Panc1 (cell line): ENCODE measurements at regions of chr9 and their contacts with region 1.

Region 1: GRCh38 chr9:107489687-107490605 is at the start of gene KLF4:
- DNase-seq: no peak
- ATAC-seq: peak; percentile 80
- H3K4me3 ChIP-seq: peak within 1 kb of the TSS; percentile 48 to 71
- H3K27ac ChIP-seq: 0 out of 2 replicates have a peak within 1 kb of the TSS, but pooled peaks have one; percentile 34
- H3K4me1 ChIP-seq: no peaks in the 10 kb centered on the region; the same call in 1 of the 2 replicates
- H3K27me3 ChIP-seq: no peaks in the 10 kb centered on the region
- CTCF ChIP-seq: no peak
- total RNA-seq, gene KLF4: 5.2 TPM

Region 2: DNA sequence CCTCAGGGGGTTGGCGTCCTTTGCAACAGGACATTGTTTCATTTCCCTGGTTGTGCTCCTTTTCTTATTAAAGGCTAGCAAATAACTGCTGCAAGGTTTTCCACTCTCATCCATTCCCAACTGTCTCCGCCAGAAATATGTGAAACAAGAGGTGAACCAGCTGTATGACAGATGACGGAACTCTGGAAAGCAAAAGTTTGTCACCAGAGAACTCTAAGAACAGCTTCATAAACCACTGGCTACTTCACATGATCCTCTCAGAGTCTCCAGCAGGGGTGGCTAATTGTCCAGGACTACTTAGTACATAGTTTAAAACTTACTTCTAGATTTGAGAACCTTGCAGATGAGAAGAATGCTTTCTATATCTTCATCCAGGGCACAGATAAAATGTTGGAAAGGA is 402.7 kb before region 1 on chr9:
- CTCF ChIA-PET with region 1: no interaction called
- POLR2A ChIA-PET with region 1: no interaction called
- in situ Hi-C with region 1: no loop called
- intact Hi-C with region 1: no loop called
- DNase-seq: no peak
- ATAC-seq: no peak
- H3K4me3 ChIP-seq: no peak overlapping the region
- H3K27ac ChIP-seq: no peak overlapping the region
- H3K4me1 ChIP-seq: no peaks in the 10 kb centered on the region
- H3K27me3 ChIP-seq: no peaks in the 10 kb centered on the region
- CTCF ChIP-seq: no peak

Region 3: GRCh38 chr9:107389617-107390071 is 100.3 kb before region 1 on chr9:
- CTCF ChIA-PET with region 1: no interaction called
- POLR2A ChIA-PET with region 1: no interaction called
- in situ Hi-C with region 1: no loop called
- intact Hi-C with region 1: no loop called
- DNase-seq: no peak
- ATAC-seq: no peak
- H3K4me3 ChIP-seq: no peak overlapping the region
- H3K27ac ChIP-seq: no peak overlapping the region
- H3K4me1 ChIP-seq: no peaks in the 10 kb centered on the region
- H3K27me3 ChIP-seq: no peaks in the 10 kb centered on the region
- CTCF ChIP-seq: no peak

Region 4: DNA sequence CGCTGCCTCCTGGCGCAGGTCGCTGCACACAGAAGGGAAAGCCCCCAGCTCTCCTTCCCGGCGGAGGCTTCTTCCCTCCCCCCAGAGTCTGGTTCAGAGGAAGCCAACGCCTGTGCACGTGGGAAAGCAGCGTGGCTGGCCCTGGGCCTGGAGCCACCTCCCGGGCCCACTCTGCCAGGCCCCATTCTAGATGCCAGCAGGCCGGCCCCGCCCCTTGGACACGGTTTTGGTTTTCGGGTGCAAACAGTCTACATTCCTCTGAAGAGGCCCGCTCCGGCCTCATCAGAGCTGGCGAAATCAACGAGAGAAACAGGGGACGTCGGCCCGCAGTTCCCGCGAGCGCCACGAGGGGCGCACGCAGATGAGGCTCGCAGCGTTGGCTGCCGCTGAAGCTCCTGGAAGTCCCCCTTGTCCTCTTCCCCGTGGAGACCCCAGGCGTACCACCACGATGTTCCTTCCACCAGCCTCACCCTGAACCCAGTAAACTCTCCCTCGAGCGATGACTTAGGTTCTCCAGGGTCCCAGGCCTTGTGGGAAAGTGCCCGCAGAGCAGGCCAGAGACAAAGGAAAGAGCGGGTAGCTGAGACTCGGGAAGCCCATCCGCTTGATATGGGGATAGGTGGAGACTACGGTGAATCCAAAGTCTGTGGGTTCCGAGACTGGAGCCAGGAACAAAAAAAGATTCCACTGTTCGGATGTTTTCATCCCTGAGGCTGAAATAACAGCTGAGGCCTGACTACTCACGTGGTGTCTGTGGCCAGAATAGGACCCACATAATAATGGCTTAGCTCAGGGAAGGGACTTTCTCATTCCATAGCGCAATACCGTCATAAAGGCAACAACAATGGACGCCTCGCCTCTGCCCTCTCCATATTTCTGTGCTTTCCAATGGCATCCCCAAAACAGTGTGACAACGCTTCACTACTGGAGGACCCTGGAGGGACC is 64.6 kb before region 1 on chr9:
- CTCF ChIA-PET with region 1: no interaction called
- POLR2A ChIA-PET with region 1: no interaction called
- in situ Hi-C with region 1: no loop called
- intact Hi-C with region 1: loop called (anchors 10 kb)
- DNase-seq: peak; percentile 32
- ATAC-seq: peak; percentile 90
- H3K4me3 ChIP-seq: peak overlapping the region in 1 of 2 experiments; percentile 39; a peak in 2 of 4 replicates
- H3K27ac ChIP-seq: no peak overlapping the region
- H3K4me1 ChIP-seq: no peaks in the 10 kb centered on the region; the same call in 1 of the 2 replicates
- H3K27me3 ChIP-seq: no peaks in the 10 kb centered on the region
- CTCF ChIP-seq: peak; percentile 92

Region 5: GRCh38 chr9:107472581-107473340 is 17.2 kb before region 1 on chr9:
- CTCF ChIA-PET with region 1: no interaction called
- POLR2A ChIA-PET with region 1: no interaction called
- in situ Hi-C with region 1: no loop called
- intact Hi-C with region 1: no loop called
- DNase-seq: no peak
- ATAC-seq: no peak
- H3K4me3 ChIP-seq: no peak overlapping the region
- H3K27ac ChIP-seq: no peak overlapping the region
- H3K4me1 ChIP-seq: no peaks in the 10 kb centered on the region
- H3K27me3 ChIP-seq: no peaks in the 10 kb centered on the region
- CTCF ChIP-seq: no peak